Naive thymus-derived CD4-positive, alpha-beta T cell (primary cell): ENCODE measurements at regions of chr5 and their contacts with region 1.

Region 1: DNA sequence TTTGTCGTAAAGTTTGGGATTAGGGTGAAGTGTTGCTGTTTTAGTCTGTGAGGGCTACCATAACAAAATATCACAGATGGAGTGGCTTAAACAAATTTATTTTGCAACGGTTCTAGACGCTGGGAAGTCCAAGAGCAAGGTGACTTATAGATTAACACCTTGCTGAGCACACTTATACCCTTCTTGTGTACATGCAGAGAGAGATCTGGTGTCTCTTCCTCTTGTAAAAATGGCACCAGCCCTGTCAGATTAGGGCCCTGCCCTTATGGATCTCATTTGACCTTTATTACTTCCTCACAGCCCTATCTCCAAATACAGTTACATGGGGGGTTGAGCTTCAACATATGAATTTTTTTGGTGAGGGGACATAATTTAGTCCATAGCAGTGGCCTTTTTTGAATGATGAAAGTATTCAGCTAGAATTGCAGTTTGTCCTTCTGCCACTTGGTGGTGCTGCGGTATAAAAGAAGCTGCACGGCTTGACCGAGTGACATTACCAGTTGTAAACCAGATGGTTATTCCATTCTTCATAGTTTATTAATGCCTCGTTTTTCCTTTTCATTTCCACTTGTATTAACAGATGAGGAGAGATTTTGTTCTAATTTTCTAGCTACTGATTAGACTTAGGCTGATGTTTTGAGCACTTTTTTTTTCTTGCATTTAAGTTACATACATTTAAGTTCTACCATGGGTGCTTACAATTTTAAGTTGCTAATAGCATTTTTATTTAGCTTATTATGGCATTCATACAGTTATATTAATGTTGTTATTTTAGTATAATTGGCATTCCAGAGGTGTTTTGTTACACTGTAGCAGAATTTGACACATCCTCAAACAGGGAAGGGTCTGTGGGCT is 19.4 kb downstream of the DCP2 start:
- DNase-seq: peak; percentile 47 to 77 (median 66)
- ATAC-seq: peak; percentile 90
- H3K4me3 ChIP-seq: no peak overlapping the region
- H3K4me3 Mint-ChIP-seq: peak overlapping the region in 3 of 10 donors; percentile 2 to 38 (median 24)
- H3K27ac ChIP-seq: no peak overlapping the region
- H3K27ac Mint-ChIP-seq: peak overlapping the region in 4 of 9 donors; percentile 29 to 62 (median 48)
- H3K4me1 ChIP-seq: peaks cover 0 to 7% of the 10 kb centered on the region in 2 donors
- H3K4me1 Mint-ChIP-seq: peaks cover 9 to 42% (median 36%) of the 10 kb centered on the region in 7 donors
- H3K27me3 ChIP-seq: no peaks in the 10 kb centered on the region
- H3K27me3 Mint-ChIP-seq: no peaks in the 10 kb centered on the region

Region 2: DNA sequence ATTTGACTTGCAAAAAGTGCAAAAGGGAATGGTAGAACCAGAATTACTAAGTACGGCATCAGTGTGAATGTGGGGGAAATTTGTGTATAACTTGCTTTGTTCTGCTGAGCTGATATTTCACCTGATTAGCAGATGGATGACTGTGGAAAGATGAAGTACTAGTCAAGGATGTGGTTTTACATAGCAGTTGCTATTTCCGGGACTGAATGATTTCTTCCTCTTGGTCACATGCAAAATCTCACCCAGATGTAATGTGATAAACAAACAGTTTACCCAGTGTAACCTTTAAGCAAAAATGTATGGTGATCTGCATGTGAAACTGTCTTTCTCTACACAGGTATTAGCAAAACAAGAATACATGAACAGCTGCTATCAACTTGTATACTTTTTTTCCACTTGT is 26.7 kb after region 1 on chr5:
- CTCF ChIA-PET with region 1: interaction called, 25 read pairs
- POLR2A ChIA-PET with region 1: no interaction called
- intact Hi-C with region 1: loop called (anchors 2 kb)
- DNase-seq: peak in 7 of 9 donors; percentile 56 to 86 (median 77)
- ATAC-seq: peak; percentile 95
- H3K4me3 ChIP-seq: peak overlapping the region; percentile 1
- H3K4me3 Mint-ChIP-seq: peak overlapping the region; percentile 5 to 78 (median 70)
- H3K27ac ChIP-seq: peak overlapping the region; percentile 12
- H3K27ac Mint-ChIP-seq: peak overlapping the region; percentile 74 to 94 (median 87)
- H3K4me1 ChIP-seq: peaks cover 36 to 47% of the 10 kb centered on the region in 2 donors
- H3K4me1 Mint-ChIP-seq: peaks cover 24 to 79% (median 68%) of the 10 kb centered on the region in 7 donors
- H3K27me3 ChIP-seq: no peaks in the 10 kb centered on the region
- H3K27me3 Mint-ChIP-seq: no peaks in the 10 kb centered on the region

Region 3: GRCh38 chr5:113047234-113047633 is 51.2 kb after region 1 on chr5:
- CTCF ChIA-PET with region 1: no interaction called
- POLR2A ChIA-PET with region 1: no interaction called
- intact Hi-C with region 1: no loop called
- DNase-seq: no peak
- ATAC-seq: peak; percentile 39
- H3K4me3 ChIP-seq: no peak overlapping the region
- H3K4me3 Mint-ChIP-seq: no peak overlapping the region
- H3K27ac ChIP-seq: no peak overlapping the region
- H3K27ac Mint-ChIP-seq: no peak overlapping the region
- H3K4me1 ChIP-seq: no peaks in the 10 kb centered on the region
- H3K4me1 Mint-ChIP-seq: peaks cover 0 to 25% (median 5%) of the 10 kb centered on the region in 7 donors
- H3K27me3 ChIP-seq: no peaks in the 10 kb centered on the region
- H3K27me3 Mint-ChIP-seq: no peaks in the 10 kb centered on the region

Region 4: DNA sequence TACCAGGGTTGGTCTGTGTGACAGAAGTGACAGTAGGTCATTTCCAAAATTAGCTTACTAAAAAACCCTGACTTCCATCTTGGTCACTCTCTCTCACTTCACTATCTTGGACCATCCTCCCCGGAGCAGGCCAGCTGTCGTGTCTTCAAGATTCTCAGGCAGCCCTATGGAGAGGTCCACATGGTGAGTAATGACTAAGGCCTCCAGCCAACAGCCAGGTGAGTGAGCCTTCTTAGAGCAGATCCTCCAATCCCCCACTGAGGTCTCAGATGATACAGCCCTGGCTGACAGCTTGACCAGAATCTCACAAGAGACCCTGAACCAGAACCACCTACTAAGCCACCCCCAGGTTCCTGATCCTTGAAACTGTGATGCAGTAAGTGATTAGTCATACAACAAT is 72.6 kb after region 1 on chr5:
- CTCF ChIA-PET with region 1: interaction called, 5 read pairs
- POLR2A ChIA-PET with region 1: no interaction called
- intact Hi-C with region 1: loop called in 1 of 2 experiments (anchors 1 kb)
- DNase-seq: no peak
- ATAC-seq: no peak
- H3K4me3 ChIP-seq: no peak overlapping the region
- H3K4me3 Mint-ChIP-seq: no peak overlapping the region
- H3K27ac ChIP-seq: no peak overlapping the region
- H3K27ac Mint-ChIP-seq: no peak overlapping the region
- H3K4me1 ChIP-seq: peaks cover 0 to 5% of the 10 kb centered on the region in 2 donors
- H3K4me1 Mint-ChIP-seq: peaks cover 0 to 48% (median 22%) of the 10 kb centered on the region in 7 donors
- H3K27me3 ChIP-seq: no peaks in the 10 kb centered on the region
- H3K27me3 Mint-ChIP-seq: no peaks in the 10 kb centered on the region

Region 5: GRCh38 chr5:113378959-113379541 is 383.1 kb after region 1 on chr5:
- CTCF ChIA-PET with region 1: interaction called, 3 read pairs
- POLR2A ChIA-PET with region 1: no interaction called
- intact Hi-C with region 1: loop called (anchors 1 to 5 kb)
- DNase-seq: peak; percentile 8 to 57 (median 41)
- ATAC-seq: peak; percentile 74
- H3K4me3 ChIP-seq: no peak overlapping the region
- H3K4me3 Mint-ChIP-seq: peak overlapping the region; percentile 52 to 78 (median 65)
- H3K27ac ChIP-seq: no peak overlapping the region
- H3K27ac Mint-ChIP-seq: peak overlapping the region in 2 of 9 donors; percentile 8 to 31
- H3K4me1 ChIP-seq: peaks cover 21 to 25% of the 10 kb centered on the region in 2 donors
- H3K4me1 Mint-ChIP-seq: peaks cover 30 to 59% (median 52%) of the 10 kb centered on the region in 7 donors
- H3K27me3 ChIP-seq: no peaks in the 10 kb centered on the region
- H3K27me3 Mint-ChIP-seq: peaks cover 14 to 32% (median 27%) of the 10 kb centered on the region in 5 donors

Region 6: DNA sequence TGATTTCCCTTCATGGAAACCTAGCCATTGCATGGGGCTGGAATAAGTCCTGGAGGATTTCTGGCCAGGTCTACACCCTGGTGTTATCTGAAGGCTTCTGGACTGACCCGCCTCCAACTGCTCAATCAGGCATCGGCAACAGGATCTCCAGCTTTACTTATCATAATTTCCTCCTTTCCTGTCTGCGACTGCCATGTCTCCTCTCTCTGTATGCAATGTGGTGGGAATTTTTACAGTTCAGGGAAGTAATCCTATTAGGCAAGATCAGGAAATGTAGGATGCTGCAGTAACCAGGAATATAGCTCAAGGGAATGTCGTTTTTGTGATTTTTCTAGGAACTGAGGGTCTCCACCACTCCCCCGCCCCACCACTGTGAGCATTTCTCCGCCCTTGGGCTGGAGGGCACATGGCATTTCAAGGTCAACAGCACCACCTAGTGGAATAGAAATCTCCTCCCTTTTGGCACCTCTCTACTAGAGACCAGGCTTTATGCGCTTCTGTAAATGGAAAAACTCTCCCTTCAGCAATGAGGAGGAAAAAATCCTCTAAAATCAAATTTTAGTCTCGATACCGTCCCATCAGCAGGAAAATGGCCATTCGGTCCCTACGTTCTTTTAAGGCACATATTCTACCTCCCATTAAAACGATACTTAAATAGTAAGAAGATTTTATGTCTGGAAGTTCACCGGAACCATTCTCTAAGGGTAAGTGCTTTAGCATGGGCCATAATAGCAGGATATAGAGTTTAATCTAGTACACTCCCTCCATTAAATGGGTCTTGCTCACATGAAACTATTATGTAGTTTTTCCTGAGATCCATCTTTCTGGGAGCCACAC is 610.5 kb after region 1 on chr5:
- CTCF ChIA-PET with region 1: interaction called, 26 read pairs
- POLR2A ChIA-PET with region 1: no interaction called
- intact Hi-C with region 1: loop called (anchors 1 kb)
- DNase-seq: peak in 8 of 9 donors; percentile 29 to 68 (median 56)
- ATAC-seq: peak; percentile 89
- H3K4me3 ChIP-seq: no peak overlapping the region
- H3K4me3 Mint-ChIP-seq: no peak overlapping the region
- H3K27ac ChIP-seq: no peak overlapping the region
- H3K27ac Mint-ChIP-seq: no peak overlapping the region
- H3K4me1 ChIP-seq: no peaks in the 10 kb centered on the region
- H3K4me1 Mint-ChIP-seq: peaks cover 4 to 10% (median 6%) of the 10 kb centered on the region in 7 donors
- H3K27me3 ChIP-seq: no peaks in the 10 kb centered on the region
- H3K27me3 Mint-ChIP-seq: peaks cover 13 to 38% (median 27%) of the 10 kb centered on the region in 5 donors